Activated CD4-positive, alpha-beta memory T cell treated with anti-CD3 and anti-CD28 coated beads for 36 hours (primary cell): ENCODE measurements at regions of chr3 and their contacts with region 1.

Region 1: GRCh38 chr3:38164966-38165680 is at the start of gene OXSR1:
- DNase-seq: peak; percentile 98
- H3K4me3 Mint-ChIP-seq: peak within 1 kb of the TSS; percentile 96
- H3K27ac Mint-ChIP-seq: peak within 1 kb of the TSS; percentile 99
- H3K4me1 Mint-ChIP-seq: peaks cover 38% of the 10 kb centered on the region
- H3K27me3 Mint-ChIP-seq: no peaks in the 10 kb centered on the region
- total RNA-seq, gene OXSR1: 47.5 to 48.5 TPM

Region 2: GRCh38 chr3:36993326-36994283 is 1171.5 kb before region 1 on chr3 and contains the start of gene MLH1:
- CTCF ChIA-PET with region 1: no interaction called
- POLR2A ChIA-PET with region 1: no interaction called
- intact Hi-C with region 1: loop called (anchors 10 kb)
- DNase-seq: peak; percentile 100
- H3K4me3 Mint-ChIP-seq: no peak within 1 kb of the TSS
- H3K27ac Mint-ChIP-seq: no peak within 1 kb of the TSS
- H3K4me1 Mint-ChIP-seq: peaks cover 38% of the 10 kb centered on the region
- H3K27me3 Mint-ChIP-seq: no peaks in the 10 kb centered on the region
- total RNA-seq, gene MLH1: 85.8 to 102 TPM

Region 3: GRCh38 chr3:37620071-37620635 is 545.0 kb before region 1 on chr3:
- CTCF ChIA-PET with region 1: no interaction called
- POLR2A ChIA-PET with region 1: no interaction called
- intact Hi-C with region 1: no loop called
- DNase-seq: no peak
- H3K4me3 Mint-ChIP-seq: no peak overlapping the region
- H3K27ac Mint-ChIP-seq: no peak overlapping the region
- H3K4me1 Mint-ChIP-seq: no peaks in the 10 kb centered on the region
- H3K27me3 Mint-ChIP-seq: peaks cover 3% of the 10 kb centered on the region

Region 4: GRCh38 chr3:38039101-38039898 is 125.8 kb before region 1 on chr3 and contains the start of gene DLEC1:
- CTCF ChIA-PET with region 1: no interaction called
- POLR2A ChIA-PET with region 1: no interaction called
- intact Hi-C with region 1: loop called (anchors 1 kb)
- DNase-seq: peak; percentile 92
- H3K4me3 Mint-ChIP-seq: peak within 1 kb of the TSS; percentile 48
- H3K27ac Mint-ChIP-seq: peak within 1 kb of the TSS; percentile 93
- H3K4me1 Mint-ChIP-seq: peaks cover 33% of the 10 kb centered on the region
- H3K27me3 Mint-ChIP-seq: no peaks in the 10 kb centered on the region
- total RNA-seq, gene DLEC1: 0.70 to 1.1 TPM

Region 5: DNA sequence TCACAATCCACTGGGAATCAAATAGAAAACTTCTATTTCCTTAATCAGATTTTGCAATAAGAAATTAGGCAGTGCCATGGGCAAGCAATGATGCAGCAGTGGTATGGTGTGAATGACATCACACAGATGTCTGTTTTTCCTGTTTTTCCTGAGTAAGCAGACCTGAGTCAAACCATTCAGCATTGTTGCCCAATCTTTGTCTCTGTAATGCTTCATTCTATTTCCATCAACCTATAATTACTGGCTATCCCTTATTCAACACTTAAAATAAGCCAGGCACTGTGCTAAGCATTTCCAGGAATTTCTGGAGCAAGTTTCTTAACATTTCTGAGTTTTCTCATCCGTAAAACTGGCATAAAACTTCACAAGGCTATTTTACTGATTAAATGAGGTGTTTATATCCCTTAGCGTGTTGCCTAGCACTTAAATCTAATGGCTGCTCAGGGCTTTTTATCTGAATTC is 11.1 kb before region 1 on chr3:
- CTCF ChIA-PET with region 1: interaction called, 3 read pairs
- POLR2A ChIA-PET with region 1: interaction called, 17 read pairs
- intact Hi-C with region 1: loop called (anchors 1 kb)
- DNase-seq: no peak
- H3K4me3 Mint-ChIP-seq: no peak overlapping the region
- H3K27ac Mint-ChIP-seq: no peak overlapping the region
- H3K4me1 Mint-ChIP-seq: peaks cover 33% of the 10 kb centered on the region
- H3K27me3 Mint-ChIP-seq: no peaks in the 10 kb centered on the region

Region 6: GRCh38 chr3:38205472-38205805 is 40.3 kb after region 1 on chr3:
- CTCF ChIA-PET with region 1: no interaction called
- POLR2A ChIA-PET with region 1: interaction called, 9 read pairs
- intact Hi-C with region 1: loop called (anchors 2 kb)
- DNase-seq: peak; percentile 54
- H3K4me3 Mint-ChIP-seq: no peak overlapping the region
- H3K27ac Mint-ChIP-seq: peak overlapping the region; percentile 2
- H3K4me1 Mint-ChIP-seq: peaks cover 59% of the 10 kb centered on the region
- H3K27me3 Mint-ChIP-seq: no peaks in the 10 kb centered on the region

Region 7: GRCh38 chr3:38346587-38347410 is 181.7 kb after region 1 on chr3 and contains the start of gene XYLB:
- CTCF ChIA-PET with region 1: interaction called, 20 read pairs
- POLR2A ChIA-PET with region 1: interaction called, 3 read pairs
- intact Hi-C with region 1: loop called (anchors 2 kb)
- DNase-seq: peak; percentile 84
- H3K4me3 Mint-ChIP-seq: peak within 1 kb of the TSS; percentile 71
- H3K27ac Mint-ChIP-seq: no peak within 1 kb of the TSS
- H3K4me1 Mint-ChIP-seq: peaks cover 6% of the 10 kb centered on the region
- H3K27me3 Mint-ChIP-seq: no peaks in the 10 kb centered on the region
- total RNA-seq, gene XYLB: 4.8 to 4.9 TPM